Dendritic cell treated with granulocyte-macrophage colony-stimulating factor and Interleukin-4, amounts not matched to agents 40 ng/mL and 50 ng/mL, for 4 days (primary cell): ENCODE measurements at regions of chr13 and their contacts with region 1.

Region 1: DNA sequence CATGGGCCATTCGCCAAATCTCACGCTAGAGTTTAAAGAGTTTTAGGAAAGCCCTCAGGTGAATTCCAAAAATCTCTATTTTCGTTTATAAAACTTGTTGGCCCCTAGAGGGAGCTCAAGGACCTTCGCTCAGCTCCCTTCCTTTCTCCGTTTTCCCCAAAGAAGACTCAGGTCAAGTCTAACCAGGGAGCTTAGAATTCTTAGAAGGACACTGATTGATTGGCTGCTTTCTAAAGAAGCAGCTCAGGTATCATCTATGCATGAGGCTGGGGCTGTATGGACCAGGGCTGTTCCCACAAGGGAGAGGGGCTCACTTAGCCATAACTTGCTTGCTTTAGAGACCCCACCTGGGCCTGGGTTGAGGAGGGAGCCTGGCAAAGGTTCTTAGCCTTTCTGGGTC is 20.5 kb downstream of the DZIP1 start:
- H3K4me3 Mint-ChIP-seq: no peak overlapping the region
- H3K27ac Mint-ChIP-seq: no peak overlapping the region
- H3K4me1 Mint-ChIP-seq: peaks cover 13% of the 10 kb centered on the region
- H3K27me3 Mint-ChIP-seq: peaks cover 3% of the 10 kb centered on the region

Region 2: DNA sequence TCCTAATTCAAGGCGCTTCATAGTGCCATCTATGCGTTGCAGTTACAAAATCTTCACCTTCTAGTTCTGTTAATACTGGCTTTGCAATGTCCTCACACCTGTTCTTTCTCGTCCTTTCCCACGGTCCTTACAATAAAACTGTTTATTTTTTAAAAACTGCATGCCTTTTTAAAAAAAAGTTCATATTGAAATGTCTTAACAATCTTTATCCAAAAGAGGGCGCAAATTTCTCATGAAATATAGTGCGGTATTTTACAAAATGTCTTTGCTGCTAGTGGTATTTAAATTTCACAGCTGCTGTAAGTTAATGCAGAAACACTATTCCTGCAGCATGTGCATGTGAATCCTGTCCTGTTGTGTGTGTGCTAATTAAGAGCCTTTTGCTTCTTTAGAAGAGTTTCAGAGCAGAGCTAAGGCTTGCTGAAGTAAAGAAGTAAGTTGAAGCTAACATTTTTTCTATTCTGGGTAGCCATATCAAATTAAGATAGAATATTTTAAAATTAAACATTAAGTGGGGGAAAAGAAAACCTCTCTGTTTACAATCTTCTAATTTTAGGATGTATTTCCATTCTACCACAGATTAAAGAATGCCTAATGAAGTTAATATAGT is 87.3 kb before region 1 on chr13:
- intact Hi-C with region 1: loop called (anchors 10 kb)
- H3K4me3 Mint-ChIP-seq: no peak overlapping the region
- H3K27ac Mint-ChIP-seq: no peak overlapping the region
- H3K4me1 Mint-ChIP-seq: peaks cover 19% of the 10 kb centered on the region
- H3K27me3 Mint-ChIP-seq: no peaks in the 10 kb centered on the region

Region 3: DNA sequence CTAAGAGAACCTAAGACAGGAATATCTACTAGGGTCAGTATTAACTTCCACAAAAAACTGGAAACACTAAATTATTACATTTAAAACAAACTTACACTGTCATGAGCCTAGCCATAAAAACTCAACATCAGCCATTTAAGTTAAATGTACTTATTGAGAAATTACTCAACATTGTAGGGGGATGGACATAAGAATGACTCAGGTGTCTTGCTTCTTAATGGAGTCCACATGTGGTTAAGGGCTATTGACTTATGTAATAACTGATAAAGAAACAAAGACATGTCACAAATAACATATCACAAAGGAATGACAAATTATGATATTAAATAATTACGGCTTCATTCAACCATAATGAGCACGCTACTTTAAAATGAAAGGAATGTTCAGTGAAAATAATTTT is 35.3 kb before region 1 on chr13:
- intact Hi-C with region 1: no loop called
- H3K4me3 Mint-ChIP-seq: no peak overlapping the region
- H3K27ac Mint-ChIP-seq: no peak overlapping the region
- H3K4me1 Mint-ChIP-seq: no peaks in the 10 kb centered on the region
- H3K27me3 Mint-ChIP-seq: no peaks in the 10 kb centered on the region

Region 4: GRCh38 chr13:95643936-95644598 is 20.0 kb after region 1 on chr13:
- intact Hi-C with region 1: no loop called
- H3K4me3 Mint-ChIP-seq: peak overlapping the region; percentile 68
- H3K27ac Mint-ChIP-seq: no peak overlapping the region
- H3K4me1 Mint-ChIP-seq: peaks cover 20% of the 10 kb centered on the region
- H3K27me3 Mint-ChIP-seq: peaks cover 53% of the 10 kb centered on the region

Region 5: DNA sequence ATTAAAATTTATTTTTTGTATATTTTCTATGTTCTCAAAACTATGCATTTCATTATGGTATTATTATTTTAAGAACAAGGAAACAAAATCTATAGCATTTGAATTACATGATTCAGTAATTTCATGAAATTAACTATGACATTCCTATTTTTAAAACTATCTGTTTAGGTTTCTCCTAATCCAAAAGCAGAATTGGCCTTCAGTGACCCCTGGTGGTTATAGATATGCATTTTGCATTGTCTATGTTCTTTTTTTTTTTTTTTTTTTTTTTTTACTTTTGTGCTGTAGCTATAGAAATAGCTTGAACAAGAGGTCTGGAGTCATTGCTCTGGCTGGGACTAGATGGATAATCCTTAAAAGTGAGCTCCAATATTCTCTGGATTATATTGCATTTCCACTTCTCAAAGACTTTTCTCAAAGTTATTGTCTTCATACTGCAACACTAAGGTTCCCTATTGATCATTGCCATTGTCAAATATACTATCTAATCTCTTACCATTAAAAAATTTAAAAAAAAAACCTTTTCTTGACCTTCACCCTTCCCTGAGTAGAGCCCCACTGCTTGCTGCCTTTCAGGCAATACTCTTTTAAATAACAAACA is 37.1 kb after region 1 on chr13:
- intact Hi-C with region 1: loop called (anchors 5 kb)
- H3K4me3 Mint-ChIP-seq: no peak overlapping the region
- H3K27ac Mint-ChIP-seq: no peak overlapping the region
- H3K4me1 Mint-ChIP-seq: no peaks in the 10 kb centered on the region
- H3K27me3 Mint-ChIP-seq: no peaks in the 10 kb centered on the region

Region 6: DNA sequence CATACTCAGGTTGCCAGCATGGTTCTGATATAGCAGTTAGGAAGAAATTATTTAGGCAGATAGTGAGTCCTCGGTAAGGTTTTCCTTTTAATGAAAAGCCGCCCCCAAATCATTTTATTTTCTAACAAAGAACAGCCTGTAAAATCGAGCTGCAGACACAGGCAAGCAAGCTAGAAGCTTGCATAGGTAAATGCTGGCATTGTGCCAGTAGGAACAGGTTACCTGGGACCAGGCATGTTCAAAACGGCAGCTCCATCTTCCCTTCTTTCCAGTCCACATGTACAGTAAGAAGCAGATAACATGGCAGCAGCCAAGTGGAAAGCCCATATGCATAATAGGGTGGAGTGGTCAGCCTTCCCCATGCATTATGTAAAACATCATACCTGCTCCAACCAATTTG is 358.1 kb after region 1 on chr13:
- intact Hi-C with region 1: loop called (anchors 2 kb)
- H3K4me3 Mint-ChIP-seq: no peak overlapping the region
- H3K27ac Mint-ChIP-seq: no peak overlapping the region
- H3K4me1 Mint-ChIP-seq: no peaks in the 10 kb centered on the region
- H3K27me3 Mint-ChIP-seq: no peaks in the 10 kb centered on the region